ENCODE measurements at regions of chr5 and their contacts with region 1.

Region 1: GRCh38 chr5:142699184-142699720 is 13.4 kb upstream of the FGF1 start:
- DNase-seq: peak; percentile 92 to 94
- ATAC-seq: peak; percentile 96
- H3K4me3 ChIP-seq: no peak overlapping the region
- H3K27ac ChIP-seq: no peak overlapping the region
- H3K4me1 ChIP-seq: peaks cover 0 to 8% of the 10 kb centered on the region in 2 donors
- H3K27me3 ChIP-seq: no peaks in the 10 kb centered on the region

Region 2: DNA sequence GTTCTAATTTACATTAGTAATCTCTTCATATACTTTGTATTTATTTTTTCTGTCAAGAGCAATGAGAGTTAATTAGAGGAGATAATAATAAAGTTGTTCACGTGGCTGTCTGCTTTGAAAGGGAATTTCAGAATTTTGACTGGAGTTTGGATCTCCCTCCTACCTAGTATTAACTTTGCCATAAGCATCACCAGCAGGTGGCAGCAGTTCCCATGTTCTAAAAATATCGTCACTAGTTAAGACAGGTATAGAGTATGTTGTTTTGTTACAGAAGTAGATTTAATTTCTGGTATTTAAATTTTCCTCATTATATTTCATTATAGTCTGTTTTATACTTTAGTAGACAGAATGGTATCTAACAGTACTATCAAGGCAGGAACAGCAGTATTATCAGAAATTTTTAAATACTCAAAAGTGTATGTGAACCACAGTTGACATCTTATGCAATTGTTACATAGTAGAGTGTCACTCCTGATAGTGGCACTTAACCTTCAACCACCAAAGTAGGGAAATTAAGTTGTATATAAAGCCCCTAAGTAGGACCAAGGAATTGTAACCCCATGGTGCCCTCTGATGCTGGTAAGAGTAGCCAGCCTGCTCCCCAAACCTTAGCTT is 706.8 kb before region 1 on chr5:
- intact Hi-C with region 1: loop called in 1 of 2 experiments (anchors 10 kb)
- DNase-seq: peak; percentile 70 to 83
- ATAC-seq: peak; percentile 70
- H3K4me3 ChIP-seq: no peak overlapping the region
- H3K27ac ChIP-seq: no peak overlapping the region
- H3K4me1 ChIP-seq: no peaks in the 10 kb centered on the region
- H3K27me3 ChIP-seq: no peaks in the 10 kb centered on the region

Region 3: GRCh38 chr5:142655339-142656267 is 43.6 kb before region 1 on chr5:
- intact Hi-C with region 1: loop called (anchors 1 to 2 kb)
- DNase-seq: peak; percentile 87 to 94
- ATAC-seq: peak; percentile 94
- H3K4me3 ChIP-seq: no peak overlapping the region
- H3K27ac ChIP-seq: peak overlapping the region in 1 of 2 donors; percentile 37
- H3K4me1 ChIP-seq: no peaks in the 10 kb centered on the region
- H3K27me3 ChIP-seq: no peaks in the 10 kb centered on the region